ENCODE measurements at regions of chr19 and their contacts with region 1.

Region 1: GRCh38 chr19:18281082-18282020 is at the start of gene JUND:
- DNase-seq: peak; percentile 99
- ATAC-seq: peak; percentile 68 to 88 (median 79)
- H3K4me3 ChIP-seq: peak within 1 kb of the TSS; percentile 63 to 100 (median 92)
- H3K27ac ChIP-seq: peak within 1 kb of the TSS; percentile 99 to 100 (median 100)
- H3K4me1 ChIP-seq: peaks cover 10 to 52% (median 38%) of the 10 kb centered on the region in 12 donors
- H3K27me3 ChIP-seq: no peaks in the 10 kb centered on the region
- CTCF ChIP-seq: peak in 2 of 12 donors; percentile 21 to 22
- POLR2A ChIP-seq: peak; percentile 90 to 98
- total RNA-seq, gene JUND: 80.2 to 352 (median 137) TPM

Region 2: GRCh38 chr19:18224525-18225354 is 56.6 kb before region 1 on chr19:
- intact Hi-C with region 1: no loop called
- DNase-seq: peak; percentile 97 to 99 (median 98)
- ATAC-seq: peak; percentile 98 to 99 (median 98)
- H3K4me3 ChIP-seq: peak overlapping the region; percentile 9 to 64 (median 50)
- H3K27ac ChIP-seq: peak overlapping the region; percentile 36 to 93 (median 69)
- H3K4me1 ChIP-seq: peaks cover 0 to 44% (median 22%) of the 10 kb centered on the region in 12 donors
- H3K27me3 ChIP-seq: peaks cover 18 to 67% (median 24%) of the 10 kb centered on the region in 9 donors
- CTCF ChIP-seq: no peak
- POLR2A ChIP-seq: peak in 1 of 2 donors; percentile 7

Region 3: GRCh38 chr19:18291590-18292461 is 10.5 kb after region 1 on chr19:
- intact Hi-C with region 1: loop called in 3 of 10 experiments (anchors 1 kb)
- DNase-seq: peak; percentile 93 to 94 (median 93)
- ATAC-seq: peak; percentile 71 to 85 (median 82)
- H3K4me3 ChIP-seq: peak overlapping the region; percentile 64 to 98 (median 77)
- H3K27ac ChIP-seq: peak overlapping the region; percentile 96 to 100 (median 99)
- H3K4me1 ChIP-seq: peaks cover 0 to 43% (median 22%) of the 10 kb centered on the region in 12 donors
- H3K27me3 ChIP-seq: no peaks in the 10 kb centered on the region
- CTCF ChIP-seq: peak in 2 of 12 donors; percentile 2
- POLR2A ChIP-seq: peak in 1 of 2 donors; percentile 54

Region 4: GRCh38 chr19:18322759-18323460 is 41.6 kb after region 1 on chr19 and contains the start of gene LSM4:
- intact Hi-C with region 1: loop called (anchors 1 to 2 kb)
- DNase-seq: peak; percentile 98 to 99 (median 99)
- ATAC-seq: peak; percentile 96 to 98 (median 96)
- H3K4me3 ChIP-seq: peak within 1 kb of the TSS; percentile 25 to 91 (median 81)
- H3K27ac ChIP-seq: peak within 1 kb of the TSS; percentile 62 to 98 (median 90)
- H3K4me1 ChIP-seq: peaks cover 2 to 60% (median 46%) of the 10 kb centered on the region in 12 donors
- H3K27me3 ChIP-seq: no peaks in the 10 kb centered on the region
- CTCF ChIP-seq: peak in 6 of 12 donors; percentile 5 to 38 (median 18)
- POLR2A ChIP-seq: peak; percentile 22 to 82
- total RNA-seq, gene LSM4: 65.8 to 167 (median 101) TPM

Region 5: DNA sequence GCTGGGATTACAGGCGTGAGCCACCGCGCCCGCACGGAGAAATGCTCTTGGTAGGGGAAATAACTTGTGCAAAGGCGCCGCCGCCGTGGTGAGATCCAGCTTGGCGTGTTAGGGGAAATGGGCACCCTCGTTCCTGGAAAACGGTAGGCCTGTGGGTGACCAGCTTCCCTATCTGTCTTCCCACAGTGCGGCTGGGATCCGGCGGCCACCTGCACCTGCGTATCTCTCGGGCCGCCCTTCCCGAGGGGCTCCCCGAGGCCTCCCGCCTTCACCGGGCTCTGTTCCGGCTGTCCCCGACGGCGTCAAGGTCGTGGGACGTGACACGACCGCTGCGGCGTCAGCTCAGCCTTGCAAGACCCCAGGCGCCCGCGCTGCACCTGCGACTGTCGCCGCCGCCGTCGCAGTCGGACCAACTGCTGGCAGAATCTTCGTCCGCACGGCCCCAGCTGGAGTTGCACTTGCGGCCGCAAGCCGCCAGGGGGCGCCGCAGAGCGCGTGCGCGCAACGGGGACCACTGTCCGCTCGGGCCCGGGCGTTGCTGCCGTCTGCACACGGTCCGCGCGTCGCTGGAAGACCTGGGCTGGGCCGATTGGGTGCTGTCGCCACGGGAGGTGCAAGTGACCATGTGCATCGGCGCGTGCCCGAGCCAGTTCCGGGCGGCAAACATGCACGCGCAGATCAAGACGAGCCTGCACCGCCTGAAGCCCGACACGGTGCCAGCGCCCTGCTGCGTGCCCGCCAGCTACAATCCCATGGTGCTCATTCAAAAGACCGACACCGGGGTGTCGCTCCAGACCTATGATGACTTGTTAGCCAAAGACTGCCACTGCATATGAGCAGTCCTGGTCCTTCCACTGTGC is 107.0 kb after region 1 on chr19:
- intact Hi-C with region 1: loop called in 2 of 10 experiments (anchors 10 kb)
- DNase-seq: peak; percentile 84 to 93 (median 86)
- ATAC-seq: peak; percentile 64 to 94 (median 88)
- H3K4me3 ChIP-seq: peak overlapping the region in 11 of 12 donors; percentile 3 to 59 (median 43)
- H3K27ac ChIP-seq: peak overlapping the region in 11 of 12 donors; percentile 10 to 86 (median 30)
- H3K4me1 ChIP-seq: peaks cover 0 to 44% (median 15%) of the 10 kb centered on the region in 12 donors
- H3K27me3 ChIP-seq: no peaks in the 10 kb centered on the region
- CTCF ChIP-seq: peak; percentile 99 to 100 (median 100)
- POLR2A ChIP-seq: no peak

Region 6: DNA sequence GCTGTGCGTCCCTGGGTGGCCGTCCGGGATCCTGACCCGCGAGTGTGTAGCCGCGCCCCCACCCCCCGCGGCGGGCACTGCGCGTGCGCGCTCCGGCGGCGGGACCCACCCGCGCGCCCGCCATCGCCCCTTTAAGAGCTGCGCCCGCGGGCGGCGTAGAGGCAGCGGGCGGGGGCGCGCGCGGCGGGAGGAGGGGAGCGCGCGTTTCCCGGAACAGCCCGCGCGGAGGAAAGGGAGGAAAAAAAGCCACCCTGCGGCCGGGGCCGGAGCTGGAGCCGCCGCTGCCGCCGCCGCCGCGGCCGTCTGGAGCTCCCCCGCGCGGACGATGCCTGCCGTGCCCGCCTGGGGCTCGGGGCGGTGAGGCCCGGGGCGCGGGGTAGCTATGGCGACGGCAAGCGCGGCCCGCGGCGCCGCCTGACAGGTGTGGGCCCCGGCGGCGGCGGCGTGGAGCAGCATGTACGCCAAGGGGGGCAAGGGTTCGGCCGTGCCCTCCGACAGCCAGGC is 137.9 kb after region 1 on chr19 and contains the start of gene SSBP4:
- intact Hi-C with region 1: loop called in 5 of 10 experiments (anchors 1 to 10 kb)
- DNase-seq: peak; percentile 74 to 88 (median 84)
- ATAC-seq: peak in 2 of 4 donors; percentile 10 to 22
- H3K4me3 ChIP-seq: peak within 1 kb of the TSS; percentile 52 to 99 (median 80)
- H3K27ac ChIP-seq: peak within 1 kb of the TSS; percentile 89 to 100 (median 95)
- H3K4me1 ChIP-seq: peaks cover 8 to 90% (median 69%) of the 10 kb centered on the region in 12 donors
- H3K27me3 ChIP-seq: peaks cover 0 to 22% (median 0%) of the 10 kb centered on the region in 9 donors
- CTCF ChIP-seq: peak in 8 of 12 donors; percentile 14 to 69 (median 45)
- POLR2A ChIP-seq: peak in 1 of 2 donors; percentile 50
- total RNA-seq, gene SSBP4: 23.5 to 89.8 (median 29.4) TPM